CD4-positive, alpha-beta T cell (primary cell): ENCODE measurements at regions of chr7 and their contacts with region 1.

Region 1: GRCh38 chr7:362402-363096 is 72.6 kb downstream of the FOXL3 start:
- DNase-seq: peak in 11 of 14 experiments; percentile 15 to 77 (median 59)
- ATAC-seq: peak; percentile 59
- H3K4me3 ChIP-seq: peak overlapping the region; percentile 28
- H3K4me3 Mint-ChIP-seq: peak overlapping the region; percentile 80
- H3K27ac ChIP-seq: peak overlapping the region; percentile 49 to 75
- H3K27ac Mint-ChIP-seq: peak overlapping the region; percentile 94
- H3K4me1 ChIP-seq: peaks cover 82% of the 10 kb centered on the region
- H3K4me1 Mint-ChIP-seq: peaks cover 75% of the 10 kb centered on the region
- H3K27me3 ChIP-seq: no peaks in the 10 kb centered on the region
- H3K27me3 Mint-ChIP-seq: no peaks in the 10 kb centered on the region
- CTCF ChIP-seq: no peak

Region 2: DNA sequence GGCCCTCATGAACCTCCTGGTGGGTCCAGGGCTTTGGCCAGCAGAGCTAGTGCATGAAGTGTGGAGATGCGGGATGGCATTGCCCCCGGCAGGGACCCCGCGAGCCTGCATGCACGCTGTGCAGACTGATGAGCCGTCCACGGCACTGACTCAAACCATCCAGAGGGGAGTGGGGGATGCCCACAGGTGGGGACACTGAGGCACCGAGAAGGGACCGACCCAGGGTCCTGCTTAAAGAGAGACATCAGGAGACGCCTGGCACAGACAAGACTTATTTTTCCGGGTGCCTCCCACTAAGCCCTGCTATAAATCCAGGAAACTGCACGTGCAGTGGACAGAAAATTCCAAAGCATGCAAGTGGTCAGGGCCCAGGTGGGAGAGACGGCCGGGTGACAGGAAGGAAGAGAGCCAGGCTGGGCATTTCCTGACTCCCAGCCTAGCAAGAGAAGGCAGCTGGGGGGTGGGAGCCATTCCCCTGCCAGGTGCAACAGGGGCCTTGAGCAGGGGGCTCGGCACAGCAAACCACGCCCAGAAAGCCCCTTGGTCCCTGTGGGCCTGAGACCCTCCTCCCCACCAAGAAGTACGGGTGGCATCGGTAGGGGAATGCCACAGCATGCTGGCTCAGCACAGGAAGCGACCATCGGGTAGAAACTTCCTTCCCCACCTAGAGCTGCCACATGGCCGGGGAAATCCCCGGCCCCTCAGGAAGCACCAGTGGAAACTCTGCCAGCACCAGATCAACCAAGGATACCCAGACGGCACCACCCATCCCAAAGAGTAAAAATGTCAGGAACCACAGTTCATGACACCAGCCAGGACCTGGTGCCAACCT is 18.9 kb after region 1 on chr7:
- CTCF ChIA-PET with region 1: no interaction called
- POLR2A ChIA-PET with region 1: interaction called, 16 read pairs
- intact Hi-C with region 1: loop called in 1 of 2 experiments (anchors 2 kb)
- DNase-seq: peak in 9 of 14 experiments; percentile 17 to 75 (median 53)
- ATAC-seq: peak; percentile 77
- H3K4me3 ChIP-seq: peak overlapping the region; percentile 15
- H3K4me3 Mint-ChIP-seq: peak overlapping the region; percentile 9
- H3K27ac ChIP-seq: no peak overlapping the region
- H3K27ac Mint-ChIP-seq: peak overlapping the region; percentile 25
- H3K4me1 ChIP-seq: peaks cover 34% of the 10 kb centered on the region
- H3K4me1 Mint-ChIP-seq: peaks cover 30% of the 10 kb centered on the region
- H3K27me3 ChIP-seq: no peaks in the 10 kb centered on the region
- H3K27me3 Mint-ChIP-seq: no peaks in the 10 kb centered on the region
- CTCF ChIP-seq: no peak